ENCODE measurements at regions of chr11 and their contacts with region 1.

Region 1: DNA sequence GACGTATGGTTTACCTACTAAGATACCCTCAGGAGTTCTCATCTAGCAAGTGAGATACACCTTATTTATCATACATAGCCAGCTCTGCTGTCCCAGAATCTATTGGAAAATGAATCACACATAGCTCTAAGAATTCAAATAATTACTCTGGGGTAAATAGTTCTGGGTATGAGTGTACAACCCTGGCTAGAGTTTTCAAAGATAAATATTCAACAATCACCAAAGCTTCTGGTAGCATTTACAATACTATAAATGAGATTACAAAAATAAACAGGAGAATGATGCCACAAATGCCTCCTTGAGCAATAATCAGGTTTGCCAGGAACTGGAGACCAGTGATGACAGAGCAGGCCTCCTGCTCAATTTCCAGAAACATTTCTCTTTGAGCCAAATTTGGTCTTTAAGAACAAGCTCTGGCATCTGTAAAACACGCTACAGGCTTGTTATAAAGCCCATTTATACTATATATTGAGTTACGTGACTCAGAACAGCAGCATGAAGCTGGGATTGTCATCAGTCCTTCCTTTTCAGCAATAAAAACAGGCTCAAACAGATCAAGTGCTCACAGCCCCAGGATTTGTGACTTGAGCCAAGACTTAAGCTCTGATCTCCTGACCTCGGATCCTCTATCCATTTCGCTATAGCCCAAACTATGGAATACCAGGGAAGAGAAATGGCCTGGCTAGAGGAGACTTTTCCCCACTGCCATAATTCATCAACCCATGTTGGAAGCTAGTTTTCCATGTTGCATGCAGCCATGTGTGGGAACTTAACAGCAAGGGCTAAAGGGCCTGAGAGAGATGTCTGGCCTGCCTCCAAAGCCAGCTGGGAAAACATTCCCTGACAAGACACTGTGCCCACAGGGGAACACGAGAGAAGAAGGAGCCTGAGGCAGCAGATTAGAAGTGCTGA is 19.7 kb downstream of the RAB30 start:
- DNase-seq: peak in 1 of 2 donors; percentile 79
- H3K4me3 ChIP-seq: no peak overlapping the region
- H3K27ac ChIP-seq: peak overlapping the region; percentile 89 to 92
- H3K4me1 ChIP-seq: peaks cover 0 to 22% of the 10 kb centered on the region in 2 donors
- H3K27me3 ChIP-seq: no peaks in the 10 kb centered on the region
- CTCF ChIP-seq: no peak

Region 2: GRCh38 chr11:82719361-82720105 is 332.5 kb before region 1 on chr11:
- intact Hi-C with region 1: no loop called
- DNase-seq: no peak
- H3K4me3 ChIP-seq: no peak overlapping the region
- H3K27ac ChIP-seq: no peak overlapping the region
- H3K4me1 ChIP-seq: peaks cover 0 to 29% of the 10 kb centered on the region in 2 donors
- H3K27me3 ChIP-seq: no peaks in the 10 kb centered on the region
- CTCF ChIP-seq: no peak

Region 3: GRCh38 chr11:83033972-83034672 is 17.9 kb before region 1 on chr11:
- intact Hi-C with region 1: loop called (anchors 2 kb)
- DNase-seq: peak in 1 of 2 donors; percentile 72
- H3K4me3 ChIP-seq: peak overlapping the region; percentile 32 to 41
- H3K27ac ChIP-seq: peak overlapping the region; percentile 80 to 83
- H3K4me1 ChIP-seq: peaks cover 4 to 13% of the 10 kb centered on the region in 2 donors
- H3K27me3 ChIP-seq: no peaks in the 10 kb centered on the region
- CTCF ChIP-seq: no peak